GM18951 (cell line): ENCODE measurements at regions of chr2 and their contacts with region 1.

Region 1: DNA sequence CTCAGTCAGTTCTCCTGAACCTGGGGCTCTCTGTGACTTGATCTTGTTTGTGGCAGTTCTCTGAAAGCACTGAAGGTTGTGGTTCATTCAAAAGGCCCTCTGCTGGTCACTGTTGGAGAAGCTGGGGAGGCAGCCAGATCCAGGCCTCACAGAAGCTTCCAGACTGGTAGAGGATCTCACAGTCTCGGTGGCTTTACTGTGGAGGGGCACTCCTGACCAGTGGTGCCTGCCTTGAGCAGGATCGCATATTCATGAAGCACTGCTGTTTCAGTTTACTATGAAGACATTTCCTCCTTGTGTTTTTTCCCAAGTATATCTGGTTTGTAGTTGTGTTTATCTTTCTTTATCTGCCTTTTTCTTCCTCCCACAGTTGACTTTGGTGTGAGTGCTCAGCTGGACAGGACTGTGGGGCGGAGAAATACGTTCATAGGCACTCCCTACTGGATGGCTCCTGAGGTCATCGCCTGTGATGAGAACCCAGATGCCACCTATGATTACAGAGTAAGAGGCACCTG is 133.9 kb downstream of the MAP4K4 start:
- POLR2A ChIP-seq: no peak

Region 2: GRCh38 chr2:101267671-101268656 is 563.4 kb before region 1 on chr2:
- in situ Hi-C with region 1: no loop called
- POLR2A ChIP-seq: peak; percentile 7

Region 3: DNA sequence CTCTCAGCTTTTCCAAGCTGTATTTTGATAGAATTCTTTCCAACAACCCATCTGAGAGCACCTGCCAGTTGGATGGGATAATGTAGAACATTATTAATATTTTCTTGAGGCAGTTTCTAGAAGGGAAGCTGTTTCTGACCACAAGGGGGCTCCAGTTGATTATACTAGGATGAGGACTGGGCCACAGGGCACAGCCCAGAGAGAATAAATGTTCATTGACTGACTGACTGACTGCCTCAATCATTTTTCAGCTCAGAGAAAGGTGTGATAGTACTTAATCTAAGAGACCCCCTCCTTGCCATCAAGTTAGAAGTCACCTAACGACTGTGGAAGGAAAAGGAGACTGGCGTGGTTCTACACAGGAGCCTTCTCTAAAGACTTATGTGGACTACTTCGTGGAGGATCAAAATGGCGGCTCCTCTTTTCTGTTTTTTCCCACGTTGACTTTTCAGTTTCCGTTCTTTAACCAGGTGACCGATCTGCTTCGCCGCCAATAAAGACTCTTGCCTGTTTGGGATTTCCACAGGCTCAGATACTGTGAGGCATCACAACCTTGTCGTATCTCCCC is 412.2 kb before region 1 on chr2:
- in situ Hi-C with region 1: loop called (anchors 25 kb)
- POLR2A ChIP-seq: no peak